ENCODE measurements at regions of chr20 and their contacts with region 1.

Region 1: DNA sequence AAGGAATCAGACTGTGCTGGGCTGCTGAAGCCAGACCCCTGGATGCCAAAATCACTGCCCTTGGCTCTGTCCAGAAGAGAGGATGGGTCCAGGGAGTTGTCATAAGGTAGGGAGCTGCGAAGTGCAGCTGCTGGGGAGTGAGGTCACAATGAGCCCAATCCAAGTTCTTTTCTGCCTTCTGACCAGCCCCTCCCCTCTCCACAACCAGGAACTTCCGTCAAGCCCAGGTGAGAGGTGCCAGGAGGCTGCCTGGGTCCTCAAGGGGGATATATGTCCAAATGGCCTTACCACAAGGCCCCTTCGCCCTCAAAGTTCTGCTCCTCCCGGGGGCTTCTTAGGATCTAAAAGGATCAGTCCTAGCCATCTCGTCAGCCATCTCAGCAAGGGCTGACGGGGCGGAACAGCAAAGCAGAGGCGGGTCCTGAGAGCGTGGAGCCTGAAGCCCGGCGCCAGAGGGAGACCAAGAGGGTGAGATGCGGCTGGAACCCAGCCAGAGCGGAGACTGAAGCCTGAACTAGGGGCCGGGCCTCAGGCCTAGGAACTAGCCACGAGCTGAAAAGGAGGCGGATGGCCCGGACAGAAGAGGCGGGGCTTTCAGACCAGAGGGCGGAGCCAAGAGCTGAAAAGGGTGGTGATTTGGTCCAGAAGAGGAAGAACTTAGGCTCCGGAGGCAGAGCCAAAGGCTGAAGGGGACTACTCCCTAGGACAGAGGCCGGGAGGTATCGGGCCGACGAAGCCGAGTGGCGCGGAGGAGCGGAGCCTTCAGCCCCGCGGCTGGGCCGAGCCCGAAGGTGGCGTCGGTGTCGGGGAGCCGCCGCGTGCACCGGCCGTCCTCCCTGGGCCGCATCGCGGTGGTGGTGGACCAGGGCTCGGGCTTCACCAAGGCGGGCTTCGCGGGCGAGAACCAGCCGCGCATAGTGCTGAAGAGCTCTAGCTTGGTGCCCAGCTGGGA is at the start of gene ACTL10:
- DNase-seq: peak; percentile 99
- H3K4me3 Mint-ChIP-seq: peak within 1 kb of the TSS; percentile 77
- H3K27ac Mint-ChIP-seq: peak within 1 kb of the TSS; percentile 90
- H3K4me1 Mint-ChIP-seq: peaks cover 39% of the 10 kb centered on the region
- H3K27me3 Mint-ChIP-seq: no peaks in the 10 kb centered on the region
- CTCF ChIP-seq: no peak
- total RNA-seq, gene ACTL10: 5.4 and 7.3 TPM in 2 replicates

Region 2: DNA sequence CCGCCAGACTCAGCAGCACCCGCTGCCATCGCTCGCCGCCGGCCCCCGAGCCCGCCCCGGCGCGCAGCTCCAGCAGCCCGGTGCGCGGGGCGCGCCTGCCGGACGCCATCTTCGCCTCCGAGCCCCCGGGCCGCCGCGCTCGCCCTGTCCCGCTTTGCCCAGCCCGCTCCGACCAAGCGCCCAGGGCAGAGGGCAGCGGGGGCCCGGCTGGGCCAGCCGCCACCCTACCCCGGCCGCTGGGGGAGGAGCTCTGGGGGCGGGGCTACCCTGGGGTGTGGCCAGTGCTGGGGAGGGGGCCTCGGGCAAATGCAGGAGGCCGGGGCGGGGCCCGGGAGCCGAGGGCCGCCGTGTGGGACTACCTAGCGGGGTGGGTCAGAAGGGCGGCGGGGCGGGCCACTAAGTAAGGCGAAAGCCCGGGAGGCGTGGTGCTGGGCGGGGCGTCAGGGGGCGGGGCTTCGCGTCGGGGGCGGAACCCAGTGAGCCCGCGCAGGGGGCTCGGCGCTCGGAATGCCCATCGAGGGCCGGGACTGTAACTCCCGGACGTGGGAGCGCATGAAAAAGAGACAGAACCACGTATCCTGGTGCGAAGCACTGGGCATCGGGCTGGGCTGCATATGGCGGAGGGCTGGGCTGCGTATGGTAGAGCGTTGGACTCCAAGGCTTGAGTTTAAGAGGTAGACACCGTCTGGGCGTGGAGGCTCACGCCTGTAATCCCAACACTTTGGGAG is 222.9 kb before region 1 on chr20 and contains the start of gene SNTA1:
- CTCF ChIA-PET with region 1: interaction called, 11 read pairs
- intact Hi-C with region 1: no loop called
- DNase-seq: peak; percentile 97
- H3K4me3 Mint-ChIP-seq: peak within 1 kb of the TSS; percentile 92
- H3K27ac Mint-ChIP-seq: peak within 1 kb of the TSS; percentile 56
- H3K4me1 Mint-ChIP-seq: peaks cover 16% of the 10 kb centered on the region
- H3K27me3 Mint-ChIP-seq: no peaks in the 10 kb centered on the region
- CTCF ChIP-seq: no peak
- total RNA-seq, gene SNTA1: 5.1 and 7.6 TPM in 2 replicates

Region 3: GRCh38 chr20:33653218-33653899 is 13.2 kb before region 1 on chr20:
- CTCF ChIA-PET with region 1: interaction called, 47 read pairs
- intact Hi-C with region 1: no loop called
- DNase-seq: peak; percentile 84
- H3K4me3 Mint-ChIP-seq: peak overlapping the region; percentile 55
- H3K27ac Mint-ChIP-seq: peak overlapping the region; percentile 71
- H3K4me1 Mint-ChIP-seq: peaks cover 53% of the 10 kb centered on the region
- H3K27me3 Mint-ChIP-seq: no peaks in the 10 kb centered on the region
- CTCF ChIP-seq: peak; percentile 96

Region 4: GRCh38 chr20:33731693-33732165 is 65.2 kb after region 1 on chr20 and contains the start of gene ZNF341:
- CTCF ChIA-PET with region 1: interaction called, 3 read pairs
- intact Hi-C with region 1: loop called (anchors 5 kb)
- DNase-seq: no peak
- H3K4me3 Mint-ChIP-seq: peak within 1 kb of the TSS; percentile 78
- H3K27ac Mint-ChIP-seq: peak within 1 kb of the TSS; percentile 76
- H3K4me1 Mint-ChIP-seq: peaks cover 38% of the 10 kb centered on the region
- H3K27me3 Mint-ChIP-seq: no peaks in the 10 kb centered on the region
- CTCF ChIP-seq: peak; percentile 95
- total RNA-seq, gene ZNF341: 10.2 and 12.9 TPM in 2 replicates

Measured in Calu3 (cell line).